A673 (cell line): ENCODE measurements at regions of chr9 and their contacts with region 1.

Region 1: GRCh38 chr9:131724683-131725082 is 15.2 kb downstream of the RAPGEF1 start:
- DNase-seq: no peak
- H3K4me3 ChIP-seq: no peak overlapping the region
- H3K27ac ChIP-seq: no peak overlapping the region
- H3K4me1 ChIP-seq: peaks cover 25% of the 10 kb centered on the region
- H3K27me3 ChIP-seq: no peaks in the 10 kb centered on the region
- CTCF ChIP-seq: no peak

Region 2: GRCh38 chr9:131690950-131691573 is 33.6 kb before region 1 on chr9:
- CTCF ChIA-PET with region 1: no interaction called
- POLR2A ChIA-PET with region 1: no interaction called
- intact Hi-C with region 1: loop called (anchors 1 kb)
- DNase-seq: no peak
- H3K4me3 ChIP-seq: no peak overlapping the region
- H3K27ac ChIP-seq: no peak overlapping the region
- H3K4me1 ChIP-seq: peaks cover 29% of the 10 kb centered on the region
- H3K27me3 ChIP-seq: peaks cover 10% of the 10 kb centered on the region
- CTCF ChIP-seq: no peak